GM12878 (cell line): ENCODE measurements at regions of chr22 and their contacts with region 1.

Region 1: DNA sequence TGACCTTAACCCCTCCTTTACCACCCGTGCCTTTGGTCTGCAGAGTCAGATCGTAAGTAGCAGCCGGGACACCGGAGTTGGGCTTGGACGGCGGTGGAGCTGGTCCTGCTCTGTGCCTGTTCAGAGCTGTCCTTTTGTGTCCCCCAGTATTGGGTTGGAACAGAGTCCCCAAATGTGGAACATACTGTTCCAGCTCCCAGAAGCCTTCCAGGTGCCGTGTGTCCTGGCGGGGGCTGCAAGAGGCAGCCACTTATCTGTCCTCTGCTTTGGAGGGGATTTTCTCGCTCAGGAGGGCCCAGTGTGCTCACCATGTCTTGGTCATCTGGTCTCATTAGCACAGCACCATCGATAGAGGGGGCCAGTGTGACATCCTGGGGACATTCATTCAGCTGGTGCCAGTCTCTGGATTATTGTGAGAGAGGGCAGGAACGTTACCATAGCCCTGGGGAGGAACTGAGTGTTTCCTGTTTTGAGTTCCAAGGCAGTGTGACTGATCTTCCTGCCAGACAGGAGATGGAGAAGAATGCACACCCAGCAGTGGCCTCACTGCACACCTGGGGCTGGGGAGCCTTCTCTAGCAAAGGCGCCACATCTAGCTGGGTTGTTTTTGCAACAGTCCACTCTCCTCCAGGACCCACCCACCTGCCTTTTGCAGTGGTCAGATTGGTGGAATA is 12.4 kb downstream of the CRELD2 start:
- DNase-seq: peak; percentile 78
- ATAC-seq: peak; percentile 72
- H3K4me3 ChIP-seq: no peak overlapping the region
- H3K27ac ChIP-seq: no peak overlapping the region
- H3K4me1 ChIP-seq: peaks cover 55% of the 10 kb centered on the region
- H3K27me3 ChIP-seq: no peaks in the 10 kb centered on the region
- CTCF ChIP-seq: peak; percentile 74 to 96 (median 88); a peak in 5 of 6 replicates
- EP300 ChIP-seq: no peak
- POLR2A ChIP-seq: no peak
- RAD21 ChIP-seq: peak; percentile 86

Region 2: DNA sequence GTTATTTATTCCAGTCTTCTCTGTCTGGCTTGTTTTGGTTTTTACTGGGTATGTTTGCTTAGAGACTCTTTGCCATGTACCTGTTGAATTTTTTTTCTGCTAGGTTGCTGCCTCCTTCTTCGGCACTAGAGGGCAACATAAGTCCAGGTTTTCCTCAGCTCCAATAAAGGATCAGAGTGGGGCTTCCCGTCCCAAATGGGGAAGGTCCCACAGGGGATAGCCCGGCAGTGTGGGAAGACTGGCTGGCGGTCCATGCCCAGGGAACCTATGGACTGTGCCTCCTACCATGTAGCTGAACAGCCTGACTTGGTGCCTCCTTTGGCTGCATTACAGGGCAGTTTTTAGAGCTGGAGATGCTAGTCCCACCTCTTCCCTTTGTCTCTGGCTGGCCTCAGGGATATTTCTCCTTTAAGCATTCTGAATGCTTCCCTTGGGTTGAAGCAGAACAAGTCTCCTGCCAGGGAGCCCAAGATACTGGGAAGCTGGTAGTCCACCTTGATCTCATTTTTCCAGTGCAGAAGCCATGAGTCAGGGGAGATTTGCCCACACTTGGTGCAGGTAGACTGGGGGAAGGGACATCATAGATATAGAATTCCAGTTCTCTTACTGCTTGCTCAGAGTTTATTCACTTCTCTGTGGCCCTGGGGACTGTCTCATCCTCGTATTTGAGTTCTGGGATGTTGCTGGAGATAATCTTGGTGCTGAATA is 163.4 kb before region 1 on chr22:
- CTCF ChIA-PET with region 1: interaction called, 13 read pairs
- POLR2A ChIA-PET with region 1: no interaction called
- RAD21 ChIA-PET with region 1: interaction called, 4 read pairs
- SMC1A ChIA-PET with region 1: interaction called, 9 read pairs
- in situ Hi-C with region 1: no loop called
- intact Hi-C with region 1: no loop called
- DNase-seq: peak; percentile 50
- ATAC-seq: peak; percentile 77
- H3K4me3 ChIP-seq: no peak overlapping the region
- H3K27ac ChIP-seq: no peak overlapping the region
- H3K4me1 ChIP-seq: no peaks in the 10 kb centered on the region
- H3K27me3 ChIP-seq: no peaks in the 10 kb centered on the region
- CTCF ChIP-seq: peak; percentile 71 to 85 (median 84)
- EP300 ChIP-seq: no peak
- POLR2A ChIP-seq: no peak
- RAD21 ChIP-seq: peak; percentile 86

Region 3: DNA sequence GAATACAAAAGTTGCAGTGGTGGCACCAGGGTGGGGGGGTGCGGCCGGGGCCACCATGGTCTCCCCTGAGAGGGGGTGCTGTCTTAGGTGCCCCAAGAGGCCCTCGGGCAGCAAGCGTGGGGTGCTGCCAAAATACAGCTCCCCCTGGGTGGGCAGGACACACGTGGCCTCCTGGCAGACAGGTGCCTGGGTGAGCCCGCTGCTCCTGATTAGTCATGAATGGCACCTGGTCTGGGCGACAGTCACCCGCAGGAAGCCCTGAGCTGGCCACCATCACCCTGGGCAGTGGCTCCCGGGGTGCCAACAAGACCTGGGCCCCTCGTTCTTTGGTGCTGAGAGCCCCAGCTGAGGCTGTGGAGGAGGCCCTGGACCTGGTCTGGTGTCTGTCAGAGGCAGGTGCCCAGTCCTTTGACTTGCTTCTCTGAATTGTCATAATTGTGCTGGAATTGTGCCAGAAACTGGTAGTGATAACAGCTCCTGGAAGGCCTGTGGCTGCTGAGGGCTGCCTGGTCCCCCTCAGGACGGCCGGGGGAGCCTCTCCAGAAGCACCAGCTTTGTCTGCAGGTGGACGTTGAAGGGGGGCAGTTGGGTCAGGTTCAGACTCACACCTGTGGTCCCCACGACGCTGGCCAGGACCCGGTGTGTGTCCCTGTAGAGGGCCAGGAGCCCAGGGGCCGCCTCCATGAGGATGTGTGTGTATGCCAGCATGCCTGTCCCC is 27.4 kb before region 1 on chr22:
- CTCF ChIA-PET with region 1: no interaction called
- POLR2A ChIA-PET with region 1: no interaction called
- RAD21 ChIA-PET with region 1: no interaction called
- SMC1A ChIA-PET with region 1: no interaction called
- in situ Hi-C with region 1: no loop called
- intact Hi-C with region 1: no loop called
- DNase-seq: no peak
- ATAC-seq: no peak
- H3K4me3 ChIP-seq: no peak overlapping the region
- H3K27ac ChIP-seq: no peak overlapping the region
- H3K4me1 ChIP-seq: no peaks in the 10 kb centered on the region
- H3K27me3 ChIP-seq: no peaks in the 10 kb centered on the region
- CTCF ChIP-seq: no peak
- EP300 ChIP-seq: no peak
- POLR2A ChIP-seq: no peak; the same call in 1 of the 2 replicates
- RAD21 ChIP-seq: no peak

Region 4: DNA sequence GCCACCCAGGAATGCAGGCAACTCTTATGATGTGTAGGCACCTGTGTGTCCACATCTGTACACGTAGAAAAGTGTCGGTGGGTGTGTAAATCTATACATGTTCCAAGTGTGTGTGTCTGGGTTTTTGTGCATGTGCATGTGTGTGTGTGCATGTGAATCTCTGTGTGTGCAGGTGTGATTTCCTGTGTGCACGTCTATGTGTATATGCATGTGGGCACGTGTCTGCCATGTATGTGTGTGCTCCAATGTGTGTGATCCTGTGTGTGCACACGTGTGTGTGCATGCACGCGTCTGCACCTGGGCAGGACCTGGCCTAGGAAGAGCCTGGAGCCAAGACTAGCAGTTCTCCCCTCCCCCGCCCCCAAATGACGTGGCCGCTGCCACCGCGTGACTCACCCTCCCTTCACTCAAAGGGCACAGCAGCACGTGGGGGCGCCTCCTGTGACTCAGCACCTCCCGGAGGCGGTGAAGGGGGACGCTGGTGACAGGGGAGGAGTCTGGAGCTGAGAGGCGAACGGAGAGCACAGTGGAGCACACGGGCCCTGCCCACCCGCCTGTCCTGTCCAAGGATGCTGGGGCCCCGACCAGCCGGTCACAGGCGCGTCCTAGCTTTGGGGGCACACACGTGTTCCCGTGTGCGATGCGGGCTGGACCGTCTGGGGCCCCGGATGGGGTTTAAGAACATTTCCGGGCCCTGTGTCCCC is 39.8 kb after region 1 on chr22:
- CTCF ChIA-PET with region 1: interaction called, 15 read pairs
- POLR2A ChIA-PET with region 1: interaction called, 5 read pairs
- RAD21 ChIA-PET with region 1: interaction called, 18 read pairs
- SMC1A ChIA-PET with region 1: interaction called, 4 read pairs
- in situ Hi-C with region 1: no loop called
- intact Hi-C with region 1: loop called (anchors 2 kb)
- DNase-seq: peak; percentile 85
- ATAC-seq: peak; percentile 84
- H3K4me3 ChIP-seq: peak overlapping the region; percentile 76
- H3K27ac ChIP-seq: peak overlapping the region; percentile 89
- H3K4me1 ChIP-seq: peaks cover 41% of the 10 kb centered on the region
- H3K27me3 ChIP-seq: no peaks in the 10 kb centered on the region
- CTCF ChIP-seq: no peak
- EP300 ChIP-seq: peak in 1 of 2 experiments; percentile 75; a peak in 3 of 4 replicates
- POLR2A ChIP-seq: peak; percentile 91
- RAD21 ChIP-seq: no peak

Region 5: DNA sequence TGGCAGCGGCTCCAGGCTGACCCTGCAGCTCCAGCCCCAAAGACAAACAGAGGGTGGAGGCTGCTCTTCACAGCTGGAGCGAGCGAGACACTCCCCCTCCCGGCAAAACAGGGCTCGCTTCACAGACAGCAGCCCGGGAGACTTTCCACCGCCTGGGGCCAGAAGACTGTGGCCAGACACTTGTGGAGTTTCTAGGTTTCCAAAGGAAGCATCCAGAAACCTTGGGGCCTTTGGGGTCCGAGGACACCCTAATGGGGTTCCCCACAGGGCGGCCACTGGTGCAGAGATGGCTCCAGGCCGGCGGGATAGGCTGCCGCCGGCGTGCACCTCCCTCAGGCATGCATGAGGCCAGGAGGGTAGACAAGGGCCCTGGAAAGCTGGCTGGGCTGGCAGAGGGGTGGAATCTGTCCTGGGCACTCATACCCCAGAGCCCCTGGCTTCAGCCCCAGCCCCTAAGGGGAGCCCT is 81.9 kb after region 1 on chr22 and contains the start of gene IL17REL:
- CTCF ChIA-PET with region 1: interaction called, 18 read pairs
- POLR2A ChIA-PET with region 1: no interaction called
- RAD21 ChIA-PET with region 1: interaction called, 13 read pairs
- SMC1A ChIA-PET with region 1: no interaction called
- in situ Hi-C with region 1: no loop called
- intact Hi-C with region 1: loop called (anchors 5 kb)
- DNase-seq: no peak
- ATAC-seq: no peak
- H3K4me3 ChIP-seq: no peak within 1 kb of the TSS
- H3K27ac ChIP-seq: no peak within 1 kb of the TSS; the same call in 1 of the 2 replicates
- H3K4me1 ChIP-seq: peaks cover 33% of the 10 kb centered on the region
- H3K27me3 ChIP-seq: no peaks in the 10 kb centered on the region; a peak in 1 of 4 replicates
- CTCF ChIP-seq: no peak
- EP300 ChIP-seq: no peak
- POLR2A ChIP-seq: no peak
- RAD21 ChIP-seq: no peak
- polyA plus RNA-seq, gene IL17REL: not detected

Region 6: DNA sequence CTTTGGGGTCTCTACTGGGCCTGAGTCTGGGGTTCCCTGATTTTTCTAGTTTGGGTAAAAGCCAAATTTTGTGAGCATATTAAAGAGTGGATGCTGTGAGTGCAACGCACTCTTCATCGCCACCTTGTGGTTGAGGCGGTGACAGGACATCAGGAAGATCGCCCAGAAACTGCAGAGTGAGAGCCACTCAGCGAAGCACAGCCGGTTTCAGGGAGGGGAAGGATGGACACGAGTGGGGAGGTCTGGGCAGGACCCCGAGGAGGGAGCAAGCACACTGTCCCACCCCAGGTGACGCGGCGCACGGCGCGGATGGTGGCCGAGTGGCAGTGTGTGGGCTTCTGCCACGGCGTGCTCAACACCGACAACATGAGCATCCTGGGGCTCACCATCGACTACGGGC is 279.0 kb after region 1 on chr22:
- CTCF ChIA-PET with region 1: interaction called, 3 read pairs
- POLR2A ChIA-PET with region 1: interaction called, 3 read pairs
- RAD21 ChIA-PET with region 1: no interaction called
- SMC1A ChIA-PET with region 1: no interaction called
- in situ Hi-C with region 1: loop called (anchors 5 kb)
- intact Hi-C with region 1: no loop called
- DNase-seq: no peak
- ATAC-seq: peak; percentile 90
- H3K4me3 ChIP-seq: no peak overlapping the region
- H3K27ac ChIP-seq: no peak overlapping the region
- H3K4me1 ChIP-seq: no peaks in the 10 kb centered on the region
- H3K27me3 ChIP-seq: no peaks in the 10 kb centered on the region
- CTCF ChIP-seq: peak; percentile 85 to 91 (median 86)
- EP300 ChIP-seq: no peak
- POLR2A ChIP-seq: 0 out of 2 replicates have a peak, but pooled peaks have one; percentile 12
- RAD21 ChIP-seq: peak; percentile 73

Region 7: DNA sequence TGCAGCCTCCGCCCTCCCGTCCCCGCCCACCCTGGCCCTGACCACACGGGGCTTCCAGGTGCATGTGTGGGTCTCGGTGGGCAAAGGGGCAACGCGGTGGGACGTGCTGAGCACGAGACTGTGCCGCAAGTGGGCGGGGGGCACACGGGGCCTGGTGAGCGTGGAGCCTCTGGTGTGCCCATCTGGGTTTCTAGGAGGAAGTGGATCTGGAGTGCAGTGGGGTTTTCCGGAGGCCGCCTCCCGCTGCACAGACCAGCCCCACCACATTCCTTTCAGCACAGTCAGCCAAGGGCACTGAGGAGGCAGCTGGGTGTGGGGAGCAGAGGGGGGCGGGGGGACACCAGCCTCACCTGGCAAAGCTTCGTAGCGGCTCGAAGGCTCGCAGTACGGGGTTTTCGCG is 351.5 kb after region 1 on chr22:
- CTCF ChIA-PET with region 1: no interaction called
- POLR2A ChIA-PET with region 1: no interaction called
- RAD21 ChIA-PET with region 1: no interaction called
- SMC1A ChIA-PET with region 1: no interaction called
- in situ Hi-C with region 1: no loop called
- intact Hi-C with region 1: no loop called
- DNase-seq: no peak
- ATAC-seq: no peak
- H3K4me3 ChIP-seq: no peak overlapping the region
- H3K27ac ChIP-seq: no peak overlapping the region
- H3K4me1 ChIP-seq: no peaks in the 10 kb centered on the region
- H3K27me3 ChIP-seq: no peaks in the 10 kb centered on the region
- CTCF ChIP-seq: no peak
- EP300 ChIP-seq: no peak
- POLR2A ChIP-seq: no peak
- RAD21 ChIP-seq: no peak